ENCODE measurements at regions of chr3 and their contacts with region 1.

Region 1: DNA sequence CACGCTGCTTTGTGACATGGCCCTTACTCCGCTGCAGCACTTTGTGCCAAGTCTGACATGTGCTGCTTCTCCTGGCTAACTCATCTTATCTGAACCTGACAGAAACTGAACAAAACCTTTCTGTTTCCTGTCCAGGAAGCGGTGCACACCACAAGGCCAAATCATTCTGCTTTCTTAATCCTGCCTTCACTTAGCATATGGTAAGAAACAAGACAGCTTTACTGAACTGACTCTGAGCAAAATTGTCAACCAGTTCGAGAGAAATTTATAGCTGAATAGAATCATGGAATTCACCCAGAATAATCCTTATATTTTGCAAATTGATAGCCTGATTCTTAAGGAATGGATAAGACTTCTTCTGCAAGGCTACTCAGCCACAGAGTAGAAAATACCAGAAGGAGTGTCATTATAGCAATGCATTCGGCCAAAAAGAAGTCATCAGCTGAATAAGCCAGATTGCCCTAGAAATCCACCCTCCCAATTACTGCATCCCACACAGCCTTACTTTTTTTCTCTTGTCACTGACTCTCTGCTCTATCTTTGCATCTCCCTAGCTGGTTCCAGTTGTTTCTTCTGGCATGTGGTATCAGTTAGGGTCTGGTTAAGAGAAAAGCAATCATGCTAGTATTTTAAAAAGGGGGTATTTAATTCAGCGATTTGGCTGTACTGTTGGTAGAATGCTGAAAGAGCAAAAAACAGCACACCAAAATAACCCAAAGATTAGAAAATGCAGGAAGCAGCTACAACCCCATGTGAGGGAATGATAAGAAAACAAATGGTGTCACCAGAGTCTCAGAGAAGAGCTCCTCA is 41.6 kb upstream of the STRIT1 start:
- DNase-seq: peak; percentile 63
- ATAC-seq: peak; percentile 93
- H3K4me3 Mint-ChIP-seq: peak overlapping the region; percentile 1
- H3K27ac Mint-ChIP-seq: peak overlapping the region; percentile 83
- H3K4me1 Mint-ChIP-seq: peaks cover 41% of the 10 kb centered on the region
- H3K27me3 Mint-ChIP-seq: peaks cover 3% of the 10 kb centered on the region

Region 2: GRCh38 chr3:155323063-155323666 is 12.0 kb before region 1 on chr3:
- CTCF ChIA-PET with region 1: interaction called, 14 read pairs
- POLR2A ChIA-PET with region 1: no interaction called
- DNase-seq: peak; percentile 45
- ATAC-seq: peak; percentile 63
- H3K4me3 Mint-ChIP-seq: no peak overlapping the region
- H3K27ac Mint-ChIP-seq: no peak overlapping the region
- H3K4me1 Mint-ChIP-seq: no peaks in the 10 kb centered on the region
- H3K27me3 Mint-ChIP-seq: no peaks in the 10 kb centered on the region

Region 3: GRCh38 chr3:155631323-155632019 is 296.4 kb after region 1 on chr3:
- CTCF ChIA-PET with region 1: no interaction called
- POLR2A ChIA-PET with region 1: no interaction called
- DNase-seq: no peak
- ATAC-seq: no peak
- H3K4me3 Mint-ChIP-seq: no peak overlapping the region
- H3K27ac Mint-ChIP-seq: no peak overlapping the region
- H3K4me1 Mint-ChIP-seq: no peaks in the 10 kb centered on the region
- H3K27me3 Mint-ChIP-seq: peaks cover 9% of the 10 kb centered on the region

Measured in activated CD8-positive, alpha-beta T cell treated with anti-CD3 and anti-CD28 coated beads, Interleukin-2, amount 10 ng/mL, durations not matched to agents 7 days and 5 days (primary cell).